ENCODE measurements at regions of chrX and their contacts with region 1.

Region 1: DNA sequence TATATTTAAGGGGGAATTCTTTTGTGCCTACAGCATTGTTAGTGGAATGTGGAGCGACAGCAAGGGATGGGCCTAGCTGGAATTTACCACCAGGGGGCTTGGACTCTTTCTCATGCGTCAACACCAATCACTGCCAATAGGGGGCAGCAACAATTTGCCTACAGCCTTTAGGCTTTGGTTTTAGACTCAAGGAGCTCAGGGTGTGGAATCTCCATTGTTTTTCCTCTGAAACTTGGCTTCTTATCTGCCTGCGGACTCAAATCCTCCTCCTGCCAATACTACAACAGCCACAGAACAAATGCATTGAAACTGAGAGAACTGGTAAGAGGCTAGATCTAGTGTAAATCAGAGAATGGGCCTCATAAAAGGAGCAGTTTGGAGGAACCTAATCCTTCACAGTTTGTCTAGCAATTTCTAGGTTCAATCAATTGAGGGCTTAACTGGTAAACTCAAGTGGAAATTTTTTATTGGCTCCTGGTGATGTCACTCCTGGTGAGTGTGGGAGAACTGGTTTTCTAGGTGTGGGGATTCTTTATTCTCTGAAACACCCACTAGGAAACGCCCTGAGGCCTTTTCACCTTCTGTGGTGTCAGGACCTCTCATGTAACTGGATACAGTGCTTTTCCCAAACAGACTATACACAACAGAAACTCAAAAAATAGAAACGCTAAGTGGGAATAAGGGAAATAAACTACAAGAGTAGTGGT is 27.9 kb upstream of the TMSB4X start:
- DNase-seq: peak; percentile 79
- H3K4me3 Mint-ChIP-seq: peak overlapping the region; percentile 13
- H3K27ac Mint-ChIP-seq: peak overlapping the region; percentile 76
- H3K4me1 Mint-ChIP-seq: peaks cover 55% of the 10 kb centered on the region
- H3K27me3 Mint-ChIP-seq: no peaks in the 10 kb centered on the region

Region 2: GRCh38 chrX:12548746-12549145 is 398.2 kb before region 1 on chrX:
- CTCF ChIA-PET with region 1: no interaction called
- POLR2A ChIA-PET with region 1: no interaction called
- DNase-seq: peak; percentile 8
- H3K4me3 Mint-ChIP-seq: no peak overlapping the region
- H3K27ac Mint-ChIP-seq: no peak overlapping the region
- H3K4me1 Mint-ChIP-seq: no peaks in the 10 kb centered on the region
- H3K27me3 Mint-ChIP-seq: no peaks in the 10 kb centered on the region

Region 3: DNA sequence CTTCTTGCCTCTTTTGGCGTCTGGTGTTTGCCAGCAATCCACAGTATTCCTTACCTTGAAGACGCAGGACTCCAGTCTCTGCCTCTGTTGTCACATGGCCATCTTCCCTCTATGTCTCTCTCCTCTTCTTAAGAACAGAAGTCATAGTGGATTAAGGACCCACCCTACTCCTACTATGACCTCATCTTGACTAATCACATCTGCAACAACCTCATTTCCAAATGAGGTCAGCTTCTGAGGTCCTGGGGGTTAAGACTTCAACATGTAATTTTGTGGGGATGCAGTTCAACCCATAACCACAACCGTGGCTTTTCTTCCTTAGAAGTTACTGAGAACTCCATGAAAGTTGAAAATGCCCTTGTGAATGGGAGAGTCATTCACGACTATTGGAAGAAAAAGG is 17.3 kb before region 1 on chrX:
- CTCF ChIA-PET with region 1: interaction called, 10 read pairs
- POLR2A ChIA-PET with region 1: no interaction called
- DNase-seq: no peak
- H3K4me3 Mint-ChIP-seq: no peak overlapping the region
- H3K27ac Mint-ChIP-seq: no peak overlapping the region
- H3K4me1 Mint-ChIP-seq: no peaks in the 10 kb centered on the region
- H3K27me3 Mint-ChIP-seq: peaks cover 3% of the 10 kb centered on the region

Region 4: GRCh38 chrX:12967711-12968465 is 20.9 kb after region 1 on chrX:
- CTCF ChIA-PET with region 1: interaction called, 37 read pairs
- POLR2A ChIA-PET with region 1: interaction called, 3 read pairs
- DNase-seq: no peak
- H3K4me3 Mint-ChIP-seq: peak overlapping the region; percentile 64
- H3K27ac Mint-ChIP-seq: peak overlapping the region; percentile 92
- H3K4me1 Mint-ChIP-seq: peaks cover 57% of the 10 kb centered on the region
- H3K27me3 Mint-ChIP-seq: no peaks in the 10 kb centered on the region

Region 5: GRCh38 chrX:12984629-12985319 is 37.8 kb after region 1 on chrX:
- CTCF ChIA-PET with region 1: interaction called, 18 read pairs
- POLR2A ChIA-PET with region 1: no interaction called
- DNase-seq: peak; percentile 72
- H3K4me3 Mint-ChIP-seq: peak overlapping the region; percentile 43
- H3K27ac Mint-ChIP-seq: peak overlapping the region; percentile 99
- H3K4me1 Mint-ChIP-seq: peaks cover 74% of the 10 kb centered on the region
- H3K27me3 Mint-ChIP-seq: no peaks in the 10 kb centered on the region

Region 6: DNA sequence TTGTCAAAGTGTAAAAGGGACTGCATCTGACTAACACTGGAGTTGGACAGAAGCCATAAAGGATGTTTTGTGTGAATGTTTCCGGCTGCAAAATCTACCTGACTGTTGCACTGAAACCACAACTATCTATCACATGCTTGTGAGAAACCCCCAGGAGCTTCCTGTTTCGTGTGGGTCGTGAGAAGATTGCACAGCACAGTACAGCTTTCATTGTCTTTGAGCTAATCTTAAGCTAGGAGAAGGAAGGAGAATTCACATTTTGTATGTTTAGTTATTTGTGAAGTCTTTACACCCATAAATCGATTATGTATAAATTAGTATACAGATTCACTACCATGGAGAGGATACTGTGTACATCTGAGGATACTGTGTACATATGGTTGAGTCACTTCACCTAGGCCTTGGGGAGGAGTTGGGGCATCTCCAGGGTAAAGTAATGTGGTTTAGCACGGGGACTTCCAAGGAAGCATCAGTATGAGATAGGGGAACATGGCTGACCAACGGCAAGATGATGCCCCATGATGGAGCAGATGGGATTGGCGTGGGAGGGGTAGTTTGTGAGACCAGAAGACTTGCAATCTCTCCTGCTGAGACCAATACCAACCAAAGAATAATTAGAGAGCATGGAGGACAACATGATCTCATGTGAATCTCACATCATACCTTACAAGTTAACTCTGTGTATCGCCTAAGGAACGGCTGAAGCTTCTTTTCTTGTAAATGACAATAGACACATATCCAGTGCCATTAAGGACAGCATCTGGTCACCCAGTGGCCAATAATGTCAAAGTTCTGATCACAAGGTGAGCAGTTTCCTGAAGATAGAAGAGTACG is 140.5 kb after region 1 on chrX:
- CTCF ChIA-PET with region 1: interaction called, 137 read pairs
- POLR2A ChIA-PET with region 1: interaction called, 4 read pairs
- DNase-seq: peak; percentile 79
- H3K4me3 Mint-ChIP-seq: peak overlapping the region; percentile 78
- H3K27ac Mint-ChIP-seq: peak overlapping the region; percentile 98
- H3K4me1 Mint-ChIP-seq: peaks cover 84% of the 10 kb centered on the region
- H3K27me3 Mint-ChIP-seq: no peaks in the 10 kb centered on the region

Region 7: DNA sequence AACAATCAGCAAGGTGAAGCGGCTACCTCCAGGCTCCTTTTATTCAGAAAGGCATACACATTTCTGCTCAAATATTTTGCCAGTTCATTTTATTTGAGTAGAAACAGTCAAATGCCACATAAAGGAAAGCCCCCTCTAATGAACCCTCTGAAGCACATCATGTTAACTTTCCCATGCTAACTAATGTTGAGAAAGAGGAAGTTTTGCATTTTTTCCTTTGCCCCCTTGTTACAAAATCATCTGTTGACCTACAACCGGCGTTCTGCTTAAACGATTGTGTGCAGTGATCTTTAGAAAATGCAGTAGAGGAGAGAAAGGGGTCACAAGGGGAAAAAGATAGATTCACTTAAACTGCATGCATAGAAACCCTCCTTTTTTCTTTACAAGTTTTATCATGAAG is 398.0 kb after region 1 on chrX:
- CTCF ChIA-PET with region 1: no interaction called
- POLR2A ChIA-PET with region 1: no interaction called
- DNase-seq: no peak
- H3K4me3 Mint-ChIP-seq: no peak overlapping the region
- H3K27ac Mint-ChIP-seq: no peak overlapping the region
- H3K4me1 Mint-ChIP-seq: no peaks in the 10 kb centered on the region
- H3K27me3 Mint-ChIP-seq: no peaks in the 10 kb centered on the region

Region 8: DNA sequence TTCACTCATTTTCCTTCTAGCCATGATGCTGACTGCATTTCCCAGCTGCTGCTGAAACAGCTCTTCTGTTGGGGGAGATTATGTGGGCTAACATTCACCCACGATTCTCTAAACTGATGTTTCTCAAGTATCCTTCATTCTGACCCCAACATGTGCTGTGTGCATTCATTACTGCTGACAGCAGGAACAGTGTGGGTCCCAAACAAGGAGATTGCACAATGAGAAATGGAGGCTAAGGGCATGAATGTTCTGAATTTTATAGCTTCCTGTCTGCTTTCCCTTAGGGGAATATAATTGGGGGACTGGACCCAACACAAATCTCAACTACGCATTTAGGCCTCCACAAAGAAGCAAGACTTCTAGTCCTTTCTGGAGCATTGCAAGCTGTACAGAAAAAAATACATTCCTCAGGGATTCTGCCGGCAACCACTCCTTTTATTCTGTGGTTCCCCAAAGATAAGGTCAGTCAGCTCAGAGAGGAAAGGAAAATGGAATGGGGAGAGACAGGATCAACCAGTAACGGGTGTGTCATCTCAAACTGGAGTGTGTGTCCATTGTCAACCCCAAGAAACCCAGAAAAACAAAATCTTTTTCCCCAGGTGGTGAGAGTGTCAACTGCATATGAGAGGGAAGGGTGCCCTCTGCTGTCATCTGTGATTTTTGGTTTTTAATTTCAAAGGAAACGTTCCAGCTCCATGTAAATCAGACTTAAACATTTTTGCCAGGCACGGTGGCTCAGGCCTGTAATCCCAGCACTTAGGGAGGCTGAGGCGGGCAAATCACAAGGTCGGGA is 540.9 kb after region 1 on chrX:
- CTCF ChIA-PET with region 1: interaction called, 43 read pairs
- POLR2A ChIA-PET with region 1: no interaction called
- DNase-seq: peak; percentile 57
- H3K4me3 Mint-ChIP-seq: no peak overlapping the region
- H3K27ac Mint-ChIP-seq: peak overlapping the region; percentile 79
- H3K4me1 Mint-ChIP-seq: peaks cover 27% of the 10 kb centered on the region
- H3K27me3 Mint-ChIP-seq: no peaks in the 10 kb centered on the region